Dorsolateral prefrontal cortex (tissue), 120 donors: ENCODE measurements at regions of chr6 and their contacts with region 1.

Region 1: GRCh38 chr6:37102279-37103168 is 67.4 kb upstream of the PIM1 start:
- DNase-seq: peak; percentile 72 to 93 (median 88)
- H3K4me3 ChIP-seq: peak overlapping the region; percentile 34 to 68 (median 52)
- H3K27ac ChIP-seq: peak overlapping the region; percentile 67 to 98 (median 96)
- H3K27me3 ChIP-seq: no peaks in the 10 kb centered on the region
- CTCF ChIP-seq: peak in 35 of 56 donors; percentile 2 to 58 (median 30)

Region 2: GRCh38 chr6:37051138-37052026 is 51.1 kb before region 1 on chr6:
- intact Hi-C with region 1: loop called (anchors 2 to 5 kb)
- DNase-seq: peak; percentile 81 to 96 (median 94)
- H3K4me3 ChIP-seq: peak overlapping the region in 20 of 59 donors; percentile 1 to 38 (median 16)
- H3K27ac ChIP-seq: peak overlapping the region in 8 of 59 donors; percentile 3 to 64 (median 34)
- H3K27me3 ChIP-seq: no peaks in the 10 kb centered on the region
- CTCF ChIP-seq: peak; percentile 80 to 99 (median 95)

Region 3: GRCh38 chr6:37182736-37183590 is 80.4 kb after region 1 on chr6:
- intact Hi-C with region 1: no loop called
- DNase-seq: no peak
- H3K4me3 ChIP-seq: no peak overlapping the region
- H3K27ac ChIP-seq: peak overlapping the region in 15 of 59 donors; percentile 0 to 57 (median 30)
- H3K27me3 ChIP-seq: no peaks in the 10 kb centered on the region
- CTCF ChIP-seq: no peak